CD8-positive, alpha-beta memory T cell (primary cell): ENCODE measurements at regions of chr22 and their contacts with region 1.

Region 1: GRCh38 chr22:40808018-40808841 is 10.9 kb downstream of the SLC25A17 start:
- DNase-seq: no peak
- H3K4me3 ChIP-seq: no peak overlapping the region
- H3K4me3 Mint-ChIP-seq: no peak overlapping the region
- H3K27ac ChIP-seq: no peak overlapping the region
- H3K27ac Mint-ChIP-seq: peak overlapping the region in 3 of 8 donors; percentile 15 to 43 (median 19)
- H3K4me1 ChIP-seq: no peaks in the 10 kb centered on the region
- H3K4me1 Mint-ChIP-seq: peaks cover 9 to 29% (median 19%) of the 10 kb centered on the region in 3 donors
- H3K27me3 ChIP-seq: no peaks in the 10 kb centered on the region
- H3K27me3 Mint-ChIP-seq: no peaks in the 10 kb centered on the region

Region 2: GRCh38 chr22:40739721-40740120 is 68.5 kb before region 1 on chr22:
- CTCF ChIA-PET with region 1: no interaction called
- POLR2A ChIA-PET with region 1: interaction called, 12 read pairs
- DNase-seq: no peak
- H3K4me3 ChIP-seq: no peak overlapping the region
- H3K4me3 Mint-ChIP-seq: no peak overlapping the region
- H3K27ac ChIP-seq: no peak overlapping the region
- H3K27ac Mint-ChIP-seq: peak overlapping the region in 1 of 8 donors; percentile 57
- H3K4me1 ChIP-seq: no peaks in the 10 kb centered on the region
- H3K4me1 Mint-ChIP-seq: no peaks in the 10 kb centered on the region
- H3K27me3 ChIP-seq: no peaks in the 10 kb centered on the region
- H3K27me3 Mint-ChIP-seq: peaks cover 0 to 1% of the 10 kb centered on the region in 2 donors